K562 (cell line): ENCODE measurements at regions of chr2 and their contacts with region 1.

Region 1: DNA sequence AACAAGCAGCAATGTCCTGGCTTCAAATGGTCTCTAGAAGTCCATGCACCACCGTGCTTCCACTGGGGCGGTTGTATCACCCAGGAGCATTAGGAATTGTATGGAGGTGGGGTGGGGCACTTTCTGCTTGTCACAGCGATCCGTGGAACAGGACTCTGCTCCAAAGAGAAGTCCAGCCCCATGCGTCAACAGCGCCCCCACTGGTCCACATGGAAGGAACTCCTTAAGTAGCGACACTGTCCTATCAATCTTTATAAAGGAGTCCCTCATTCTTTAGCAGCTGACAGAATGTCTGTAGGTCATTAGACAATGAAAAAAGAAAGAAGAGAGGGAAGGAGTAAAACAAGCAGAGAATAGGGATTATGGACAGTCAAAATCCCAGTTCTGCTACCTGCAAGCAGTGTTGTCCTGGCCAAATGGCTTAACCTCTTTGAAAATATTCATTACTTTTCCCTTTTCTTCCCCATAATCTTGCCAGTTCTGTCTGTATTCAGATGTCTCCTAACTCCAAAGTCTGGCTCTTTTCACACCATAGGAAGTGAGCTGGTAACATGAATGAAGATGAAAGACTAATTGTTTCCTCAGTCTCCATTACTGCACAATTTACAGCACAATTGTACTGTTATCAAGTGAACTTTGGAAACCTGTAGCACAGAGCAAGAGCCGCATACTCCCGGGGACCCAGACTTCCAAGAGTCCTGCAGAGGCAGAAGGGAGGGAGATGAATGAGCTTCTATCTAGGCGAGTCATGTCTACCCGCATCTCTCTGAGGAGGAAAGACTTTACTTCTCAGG is 9.9 kb downstream of the NFE2L2 start:
- DNase-seq: peak; percentile 69 to 93 (median 73)
- ATAC-seq: peak; percentile 81
- H3K4me3 ChIP-seq: 0 out of 2 replicates have a peak overlapping the region, but pooled peaks have one; percentile 4
- H3K27ac ChIP-seq: peak overlapping the region; percentile 59
- H3K4me1 ChIP-seq: peaks cover 35 to 79% of the 10 kb centered on the region in 2 experiments
- H3K27me3 ChIP-seq: no peaks in the 10 kb centered on the region
- CTCF ChIP-seq: peak; percentile 88 to 98 (median 96)
- EP300 ChIP-seq: no peak
- POLR2A ChIP-seq: no peak
- RAD21 ChIP-seq: peak; percentile 62 to 81

Region 2: DNA sequence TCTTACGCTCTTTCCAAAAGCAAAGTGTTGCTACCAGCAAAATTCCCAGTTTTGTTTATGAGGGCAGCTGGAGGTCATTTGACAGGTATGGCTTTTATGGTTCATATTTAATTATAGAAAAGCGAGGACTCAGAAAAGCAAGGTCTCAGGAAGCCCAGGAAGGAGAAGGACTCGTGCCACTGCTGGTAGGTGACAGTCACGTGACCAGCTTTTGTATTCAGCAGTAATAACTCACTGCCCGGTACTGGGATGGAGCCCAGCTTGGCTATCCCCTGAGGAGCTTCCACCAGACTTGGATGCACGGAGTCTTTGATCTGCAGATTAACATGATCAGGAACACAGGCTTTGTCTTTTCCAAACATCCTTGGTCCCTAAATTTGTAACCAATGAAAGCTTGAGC is 293.9 kb before region 1 on chr2:
- CTCF ChIA-PET with region 1: no interaction called
- POLR2A ChIA-PET with region 1: no interaction called
- in situ Hi-C with region 1: no loop called
- intact Hi-C with region 1: no loop called
- DNase-seq: no peak
- ATAC-seq: no peak
- H3K4me3 ChIP-seq: no peak overlapping the region
- H3K27ac ChIP-seq: no peak overlapping the region
- H3K4me1 ChIP-seq: no peaks in the 10 kb centered on the region
- H3K27me3 ChIP-seq: 0 out of 5 replicates have a peak, but pooled peaks cover 0 to 4% of the 10 kb centered on the region in 2 experiments
- CTCF ChIP-seq: no peak
- EP300 ChIP-seq: no peak
- POLR2A ChIP-seq: no peak
- RAD21 ChIP-seq: no peak

Region 3: DNA sequence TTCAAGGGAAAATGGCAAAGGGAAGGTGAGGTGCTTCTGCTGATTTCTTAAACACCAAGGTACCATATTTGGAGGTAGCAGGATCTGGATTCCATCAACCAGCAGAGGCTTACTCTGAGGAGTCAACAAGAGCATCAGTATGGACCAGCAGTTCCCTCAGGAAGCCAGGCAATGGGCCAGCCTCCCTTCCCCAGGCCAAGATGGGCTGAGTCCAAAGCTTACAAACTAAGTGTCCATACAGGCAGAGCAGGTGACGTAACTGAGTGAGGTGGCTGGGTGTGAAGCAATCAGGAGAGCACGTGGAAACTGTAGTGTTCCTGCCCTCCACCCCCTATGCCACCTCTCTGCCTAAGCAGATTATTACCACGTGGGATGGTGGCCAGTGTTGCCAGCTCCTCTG is 176.2 kb before region 1 on chr2:
- CTCF ChIA-PET with region 1: no interaction called
- POLR2A ChIA-PET with region 1: no interaction called
- in situ Hi-C with region 1: no loop called
- intact Hi-C with region 1: no loop called
- DNase-seq: no peak
- ATAC-seq: no peak
- H3K4me3 ChIP-seq: no peak overlapping the region
- H3K27ac ChIP-seq: no peak overlapping the region
- H3K4me1 ChIP-seq: no peaks in the 10 kb centered on the region
- H3K27me3 ChIP-seq: no peaks in the 10 kb centered on the region; a peak in 1 of 5 replicates
- CTCF ChIP-seq: no peak
- EP300 ChIP-seq: no peak
- POLR2A ChIP-seq: no peak
- RAD21 ChIP-seq: no peak

Region 4: GRCh38 chr2:177229448-177230242 is 25.0 kb before region 1 on chr2:
- CTCF ChIA-PET with region 1: no interaction called
- POLR2A ChIA-PET with region 1: interaction called, 6 read pairs
- in situ Hi-C with region 1: no loop called
- intact Hi-C with region 1: loop called (anchors 2 kb)
- DNase-seq: no peak
- ATAC-seq: peak; percentile 32
- H3K4me3 ChIP-seq: no peak overlapping the region
- H3K27ac ChIP-seq: no peak overlapping the region
- H3K4me1 ChIP-seq: peaks cover 0 to 2% of the 10 kb centered on the region in 2 experiments; a peak in 2 of 5 replicates
- H3K27me3 ChIP-seq: no peaks in the 10 kb centered on the region
- CTCF ChIP-seq: no peak
- EP300 ChIP-seq: no peak
- POLR2A ChIP-seq: peak; percentile 60
- RAD21 ChIP-seq: no peak

Region 5: DNA sequence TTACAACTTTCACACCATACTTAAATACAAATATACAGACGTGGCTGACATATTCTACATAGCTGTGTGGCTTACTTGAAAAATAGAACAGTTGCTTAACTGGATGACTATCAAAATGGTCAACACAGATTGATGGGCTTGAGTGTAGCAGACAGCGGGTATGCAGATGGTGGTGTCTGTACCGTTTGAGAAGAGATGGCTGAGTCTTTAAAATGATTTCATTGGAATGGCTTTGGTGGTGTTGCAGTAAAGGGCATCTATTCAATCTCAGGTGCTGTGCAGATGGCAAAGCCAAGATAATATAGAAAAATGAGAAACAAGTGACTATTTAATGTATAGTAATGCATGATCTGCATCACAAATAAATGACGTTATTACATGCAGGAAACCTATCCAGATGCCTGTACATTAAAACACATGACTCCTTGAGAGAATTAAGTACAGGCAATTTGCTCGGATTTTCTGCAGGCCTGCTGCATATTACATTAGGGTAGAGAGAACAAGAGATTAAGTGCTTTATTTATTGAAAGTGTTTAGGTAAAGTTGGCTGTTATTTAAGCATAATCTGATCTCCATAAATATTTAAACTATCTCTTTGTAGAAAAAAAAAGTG is 206.4 kb after region 1 on chr2:
- CTCF ChIA-PET with region 1: no interaction called
- POLR2A ChIA-PET with region 1: no interaction called
- in situ Hi-C with region 1: no loop called
- intact Hi-C with region 1: no loop called
- DNase-seq: no peak
- ATAC-seq: no peak
- H3K4me3 ChIP-seq: no peak overlapping the region
- H3K27ac ChIP-seq: no peak overlapping the region
- H3K4me1 ChIP-seq: no peaks in the 10 kb centered on the region
- H3K27me3 ChIP-seq: no peaks in the 10 kb centered on the region
- CTCF ChIP-seq: no peak
- EP300 ChIP-seq: no peak
- POLR2A ChIP-seq: no peak
- RAD21 ChIP-seq: no peak